ENCODE measurements at regions of chr13 and their contacts with region 1.

Region 1: DNA sequence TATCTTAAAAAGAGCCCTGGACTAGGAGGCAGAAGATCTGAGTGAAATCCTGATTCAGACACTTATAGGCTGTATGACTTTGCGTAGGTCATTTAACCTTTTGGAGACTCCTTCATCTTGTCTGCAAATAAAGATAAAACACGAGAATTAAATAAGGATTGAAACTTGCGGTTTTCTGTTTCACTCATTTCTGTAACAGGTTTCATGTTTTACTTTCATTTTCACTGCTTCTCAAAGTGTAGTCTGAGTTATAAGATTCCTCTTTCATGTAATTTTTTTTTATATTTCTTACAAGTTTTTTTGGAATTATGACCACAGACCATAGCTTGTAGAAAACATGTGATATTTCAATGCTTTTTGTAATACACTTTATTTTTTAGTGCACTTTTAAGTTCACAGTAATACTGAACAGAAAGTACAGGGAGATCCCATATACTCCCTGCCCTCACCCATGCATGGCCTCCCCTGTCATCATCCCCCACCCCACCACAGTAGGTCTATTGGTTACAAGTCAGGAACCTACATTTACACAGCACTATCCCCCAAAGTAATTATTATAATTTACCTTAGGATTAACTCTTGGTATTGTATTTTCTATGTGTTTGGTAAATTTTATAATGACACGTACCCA is 174.6 kb downstream of the ITGBL1 start:
- DNase-seq: peak; percentile 65
- ATAC-seq: peak; percentile 86
- H3K4me3 Mint-ChIP-seq: peak overlapping the region; percentile 30
- H3K27ac Mint-ChIP-seq: peak overlapping the region; percentile 59
- H3K4me1 Mint-ChIP-seq: peaks cover 43% of the 10 kb centered on the region
- H3K27me3 Mint-ChIP-seq: no peaks in the 10 kb centered on the region
- CTCF ChIP-seq: no peak

Region 2: GRCh38 chr13:101502618-101503017 is 124.4 kb before region 1 on chr13:
- CTCF ChIA-PET with region 1: no interaction called
- POLR2A ChIA-PET with region 1: no interaction called
- intact Hi-C with region 1: no loop called
- DNase-seq: no peak
- ATAC-seq: no peak
- H3K4me3 Mint-ChIP-seq: no peak overlapping the region
- H3K27ac Mint-ChIP-seq: no peak overlapping the region
- H3K4me1 Mint-ChIP-seq: no peaks in the 10 kb centered on the region
- H3K27me3 Mint-ChIP-seq: peaks cover 18% of the 10 kb centered on the region
- CTCF ChIP-seq: no peak

Region 3: GRCh38 chr13:101520672-101521071 is 106.4 kb before region 1 on chr13:
- CTCF ChIA-PET with region 1: no interaction called
- POLR2A ChIA-PET with region 1: interaction called, 3 read pairs
- intact Hi-C with region 1: loop called (anchors 5 kb)
- DNase-seq: peak; percentile 43
- ATAC-seq: peak; percentile 96
- H3K4me3 Mint-ChIP-seq: no peak overlapping the region
- H3K27ac Mint-ChIP-seq: no peak overlapping the region
- H3K4me1 Mint-ChIP-seq: peaks cover 20% of the 10 kb centered on the region
- H3K27me3 Mint-ChIP-seq: no peaks in the 10 kb centered on the region
- CTCF ChIP-seq: no peak

Region 4: GRCh38 chr13:101649490-101650126 is 22.6 kb after region 1 on chr13:
- CTCF ChIA-PET with region 1: no interaction called
- POLR2A ChIA-PET with region 1: no interaction called
- intact Hi-C with region 1: no loop called
- DNase-seq: no peak
- ATAC-seq: no peak
- H3K4me3 Mint-ChIP-seq: no peak overlapping the region
- H3K27ac Mint-ChIP-seq: no peak overlapping the region
- H3K4me1 Mint-ChIP-seq: no peaks in the 10 kb centered on the region
- H3K27me3 Mint-ChIP-seq: peaks cover 16% of the 10 kb centered on the region
- CTCF ChIP-seq: no peak